ENCODE measurements at regions of chr12 and their contacts with region 1.

Region 1: GRCh38 chr12:31749024-31749704 is 20.3 kb upstream of the AMN1 start:
- DNase-seq: peak; percentile 88
- H3K4me3 Mint-ChIP-seq: no peak overlapping the region
- H3K27ac Mint-ChIP-seq: peak overlapping the region; percentile 76
- H3K4me1 Mint-ChIP-seq: peaks cover 63% of the 10 kb centered on the region
- H3K27me3 Mint-ChIP-seq: no peaks in the 10 kb centered on the region

Region 2: GRCh38 chr12:31736472-31736871 is 12.7 kb before region 1 on chr12:
- CTCF ChIA-PET with region 1: interaction called, 7 read pairs
- intact Hi-C with region 1: loop called (anchors 1 kb)
- DNase-seq: peak; percentile 87
- H3K4me3 Mint-ChIP-seq: no peak overlapping the region
- H3K27ac Mint-ChIP-seq: peak overlapping the region; percentile 86
- H3K4me1 Mint-ChIP-seq: peaks cover 57% of the 10 kb centered on the region
- H3K27me3 Mint-ChIP-seq: no peaks in the 10 kb centered on the region

Region 3: DNA sequence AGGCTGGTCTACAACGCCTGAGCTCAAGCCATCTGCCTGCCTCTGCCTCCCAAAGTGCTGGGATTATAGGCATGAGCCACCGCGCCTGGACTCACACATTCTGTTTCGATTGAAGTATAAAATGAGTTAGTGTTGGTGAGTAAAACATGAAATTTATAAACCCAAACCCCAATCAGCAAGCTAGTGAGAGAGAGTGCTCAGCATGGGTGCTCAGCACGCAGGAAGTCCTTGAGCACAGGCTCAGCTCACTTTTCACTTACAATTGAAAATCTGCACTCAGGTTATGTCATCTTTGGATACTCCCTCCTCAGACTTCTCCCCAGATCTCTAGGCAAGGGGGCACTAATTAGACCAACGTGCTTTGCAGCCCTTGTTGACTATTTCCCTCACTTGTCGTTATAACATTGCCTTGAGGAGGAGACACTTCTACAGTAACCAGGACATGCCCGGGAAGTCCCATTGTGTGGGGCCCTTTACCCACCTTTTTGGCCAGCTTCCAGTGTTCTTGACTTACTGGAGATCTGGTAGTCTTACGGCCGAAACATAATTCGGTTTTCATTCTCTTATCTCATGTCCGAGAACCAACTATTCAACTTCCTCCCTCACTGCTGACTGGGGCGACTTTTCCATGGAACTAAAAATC is 48.2 kb after region 1 on chr12:
- CTCF ChIA-PET with region 1: no interaction called
- intact Hi-C with region 1: loop called (anchors 1 kb)
- DNase-seq: peak; percentile 55
- H3K4me3 Mint-ChIP-seq: peak overlapping the region; percentile 16
- H3K27ac Mint-ChIP-seq: peak overlapping the region; percentile 85
- H3K4me1 Mint-ChIP-seq: peaks cover 25% of the 10 kb centered on the region
- H3K27me3 Mint-ChIP-seq: no peaks in the 10 kb centered on the region

Region 4: DNA sequence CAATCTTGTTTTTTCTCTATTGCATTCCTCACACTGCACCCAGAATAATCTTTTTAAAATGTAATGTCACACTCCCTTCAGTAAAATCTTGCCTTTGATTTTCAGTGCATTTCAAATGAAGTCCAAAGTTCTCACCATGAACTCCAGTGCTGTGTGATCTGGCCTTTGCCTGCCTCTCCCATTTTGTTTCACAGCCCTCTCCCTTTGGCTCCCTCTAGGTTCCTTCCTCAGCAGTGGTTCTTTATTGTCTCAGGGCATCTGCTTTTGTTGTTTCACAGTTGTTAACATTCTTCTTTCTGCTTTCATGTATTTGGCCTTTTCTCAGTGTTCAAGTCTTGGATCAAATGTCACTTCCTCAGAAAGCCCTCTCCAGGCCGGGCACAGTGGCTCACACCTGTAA is 64.1 kb after region 1 on chr12:
- CTCF ChIA-PET with region 1: no interaction called
- intact Hi-C with region 1: loop called (anchors 1 kb)
- DNase-seq: no peak
- H3K4me3 Mint-ChIP-seq: no peak overlapping the region
- H3K27ac Mint-ChIP-seq: no peak overlapping the region
- H3K4me1 Mint-ChIP-seq: peaks cover 18% of the 10 kb centered on the region
- H3K27me3 Mint-ChIP-seq: no peaks in the 10 kb centered on the region

Region 5: DNA sequence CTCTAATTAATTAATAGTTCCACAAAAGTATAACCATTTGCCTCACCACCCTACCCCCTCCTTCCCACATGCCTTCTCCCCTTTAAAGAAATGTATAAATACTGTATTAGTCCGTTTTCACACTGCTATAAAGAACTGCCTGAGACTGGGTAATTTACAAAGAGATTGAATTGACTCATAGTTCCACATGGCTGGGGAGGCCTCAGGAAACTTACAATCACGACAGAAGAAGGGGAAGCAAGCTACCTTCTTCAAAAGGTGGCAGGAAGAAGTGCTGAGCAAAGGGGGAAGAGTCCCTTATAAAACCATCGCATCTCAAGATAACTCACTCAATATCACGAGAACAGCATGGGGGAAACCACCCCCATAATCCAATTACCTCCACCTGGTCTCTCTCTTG is 201.8 kb after region 1 on chr12:
- CTCF ChIA-PET with region 1: no interaction called
- intact Hi-C with region 1: loop called (anchors 5 kb)
- DNase-seq: peak; percentile 63
- H3K4me3 Mint-ChIP-seq: no peak overlapping the region
- H3K27ac Mint-ChIP-seq: peak overlapping the region; percentile 68
- H3K4me1 Mint-ChIP-seq: peaks cover 39% of the 10 kb centered on the region
- H3K27me3 Mint-ChIP-seq: no peaks in the 10 kb centered on the region

Region 6: DNA sequence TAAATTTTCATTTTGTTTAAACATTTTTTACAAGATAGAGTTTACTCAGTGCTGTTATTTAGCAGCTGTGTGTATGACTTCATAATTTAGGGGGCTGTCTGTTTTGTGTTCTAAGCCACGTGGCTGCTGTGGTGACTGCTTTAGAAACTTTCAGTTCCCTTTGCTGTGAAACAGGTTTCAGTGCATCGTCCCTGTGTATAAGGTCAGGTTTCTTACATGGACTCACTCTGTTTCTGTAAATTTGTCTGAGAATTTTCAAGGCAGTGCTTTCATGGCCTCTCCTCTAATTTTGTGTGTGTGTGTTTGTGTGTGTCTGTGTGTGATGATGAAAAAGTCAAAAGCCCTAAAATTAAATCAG is 389.9 kb after region 1 on chr12:
- CTCF ChIA-PET with region 1: no interaction called
- intact Hi-C with region 1: loop called (anchors 1 kb)
- DNase-seq: peak; percentile 74
- H3K4me3 Mint-ChIP-seq: peak overlapping the region; percentile 71
- H3K27ac Mint-ChIP-seq: no peak overlapping the region
- H3K4me1 Mint-ChIP-seq: peaks cover 24% of the 10 kb centered on the region
- H3K27me3 Mint-ChIP-seq: peaks cover 2% of the 10 kb centered on the region

Region 7: DNA sequence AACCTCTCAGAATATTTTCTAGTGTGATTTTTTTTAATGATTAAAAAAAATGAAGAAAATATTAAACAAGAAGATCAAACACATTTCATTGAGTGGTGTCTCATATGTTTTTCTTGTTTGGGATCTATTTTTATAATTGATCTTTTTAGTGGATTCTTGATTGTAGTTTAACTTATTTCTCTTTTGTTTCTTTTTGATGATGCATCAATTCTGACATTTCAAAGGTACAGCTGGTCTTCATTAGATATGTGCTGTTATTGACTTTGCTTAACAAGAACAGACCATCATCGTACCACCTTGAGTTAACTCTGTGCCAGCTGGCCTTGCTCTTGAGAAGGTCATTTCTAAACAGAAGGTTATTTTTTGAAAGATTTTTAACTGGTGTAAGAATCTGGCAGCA is 604.4 kb after region 1 on chr12:
- CTCF ChIA-PET with region 1: no interaction called
- intact Hi-C with region 1: no loop called
- DNase-seq: no peak
- H3K4me3 Mint-ChIP-seq: no peak overlapping the region
- H3K27ac Mint-ChIP-seq: no peak overlapping the region
- H3K4me1 Mint-ChIP-seq: no peaks in the 10 kb centered on the region
- H3K27me3 Mint-ChIP-seq: no peaks in the 10 kb centered on the region

Measured in activated naive CD4-positive, alpha-beta T cell treated with anti-CD3 and anti-CD28 coated beads for 36 hours (primary cell).